Dendritic cell treated with granulocyte-macrophage colony-stimulating factor and Interleukin-4, amounts not matched to agents 40 ng/mL and 50 ng/mL, for 4 days (primary cell): ENCODE measurements at regions of chr1 and their contacts with region 1.

Region 1: DNA sequence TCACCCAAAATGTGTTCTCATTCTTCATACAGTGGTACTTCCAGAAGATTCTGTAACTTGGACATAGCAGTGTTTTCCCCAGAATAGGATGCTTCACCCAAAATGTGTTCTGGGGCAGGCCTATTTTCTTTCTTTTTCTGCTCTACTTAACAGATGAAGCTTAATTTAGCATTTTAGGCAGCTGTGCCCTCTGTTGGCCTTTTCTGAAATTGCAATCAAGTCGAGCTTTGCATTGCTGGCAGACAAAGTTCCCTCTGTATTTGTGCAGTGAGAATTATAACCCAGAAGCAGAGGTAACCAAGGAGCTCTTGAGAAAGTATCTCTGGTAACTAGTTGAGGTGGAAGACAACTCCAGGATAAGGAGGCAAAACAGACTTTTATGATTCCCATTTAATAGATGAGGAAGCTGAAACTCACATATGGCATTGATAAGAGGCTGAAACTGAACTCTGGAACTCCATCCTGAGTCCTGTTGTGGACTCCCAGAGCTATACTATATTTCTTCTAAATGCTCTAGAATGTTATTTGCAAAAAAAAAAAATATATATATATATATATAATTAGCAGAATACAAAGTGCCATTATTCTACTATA is 50.3 kb upstream of the L1TD1 start:
- H3K4me3 Mint-ChIP-seq: no peak overlapping the region
- H3K27ac Mint-ChIP-seq: no peak overlapping the region
- H3K4me1 Mint-ChIP-seq: peaks cover 6% of the 10 kb centered on the region
- H3K27me3 Mint-ChIP-seq: no peaks in the 10 kb centered on the region

Region 2: DNA sequence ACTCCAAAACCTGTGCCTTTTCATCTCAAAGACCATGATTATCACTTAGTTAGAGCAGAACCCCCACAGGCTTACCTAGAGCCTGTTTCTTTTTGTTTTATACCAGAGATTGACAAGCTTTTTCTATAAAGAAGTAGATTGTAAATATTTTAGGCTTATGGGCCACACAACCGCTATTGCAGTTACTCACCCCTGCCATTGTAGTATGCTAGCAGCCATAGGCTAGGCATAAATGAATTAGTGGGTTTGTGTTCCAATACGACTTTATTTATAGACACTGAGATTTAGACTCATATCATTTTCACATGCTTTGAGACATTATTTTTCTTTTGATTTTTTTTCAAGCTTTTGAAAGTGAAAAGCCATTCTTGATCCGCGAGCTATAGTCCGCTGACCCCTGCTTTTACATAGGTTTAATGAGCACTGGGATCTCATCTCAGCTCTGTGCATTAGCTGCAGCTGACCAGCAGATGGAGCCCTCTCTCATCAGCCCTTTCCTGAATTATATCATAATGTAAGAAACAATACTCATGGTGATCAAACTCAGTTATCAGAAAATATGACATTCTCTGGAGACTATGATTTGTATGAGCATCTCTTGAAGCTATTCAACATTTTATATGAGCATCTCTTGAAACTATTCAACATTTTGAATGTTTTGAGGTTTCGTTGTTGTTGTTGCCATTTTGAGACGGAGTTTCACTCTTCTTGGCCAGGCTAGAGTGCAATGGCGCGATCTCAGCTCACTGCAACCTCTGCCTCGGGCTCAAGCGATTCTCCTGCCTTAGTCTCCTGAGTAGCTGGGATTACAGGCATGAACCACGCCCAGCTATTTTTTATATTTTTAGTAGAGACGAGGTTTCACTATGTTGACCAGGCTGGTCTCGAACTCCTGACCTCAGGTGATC is 61.6 kb before region 1 on chr1:
- intact Hi-C with region 1: loop called (anchors 2 kb)
- H3K4me3 Mint-ChIP-seq: no peak overlapping the region
- H3K27ac Mint-ChIP-seq: no peak overlapping the region
- H3K4me1 Mint-ChIP-seq: no peaks in the 10 kb centered on the region
- H3K27me3 Mint-ChIP-seq: no peaks in the 10 kb centered on the region

Region 3: DNA sequence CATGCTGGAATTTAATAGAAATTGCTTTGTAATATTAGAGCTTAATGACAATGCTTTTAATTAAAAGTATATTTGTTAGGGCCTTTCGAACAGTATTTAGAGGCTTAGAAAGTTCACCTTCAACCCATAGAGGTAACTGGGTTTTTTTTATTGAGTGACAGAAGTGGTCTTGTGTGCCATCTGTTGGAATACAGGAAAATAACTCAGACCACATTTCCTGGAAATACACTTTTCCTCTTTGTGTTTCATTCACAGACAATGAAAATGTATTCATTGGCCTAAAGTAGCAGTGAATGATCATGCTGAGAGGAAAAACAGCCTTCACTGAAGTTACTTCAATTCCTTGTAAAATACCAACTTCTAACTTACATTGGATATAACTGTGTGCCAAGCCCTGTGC is 33.3 kb before region 1 on chr1:
- intact Hi-C with region 1: no loop called
- H3K4me3 Mint-ChIP-seq: no peak overlapping the region
- H3K27ac Mint-ChIP-seq: no peak overlapping the region
- H3K4me1 Mint-ChIP-seq: peaks cover under 1% of the 10 kb centered on the region
- H3K27me3 Mint-ChIP-seq: no peaks in the 10 kb centered on the region

Region 4: DNA sequence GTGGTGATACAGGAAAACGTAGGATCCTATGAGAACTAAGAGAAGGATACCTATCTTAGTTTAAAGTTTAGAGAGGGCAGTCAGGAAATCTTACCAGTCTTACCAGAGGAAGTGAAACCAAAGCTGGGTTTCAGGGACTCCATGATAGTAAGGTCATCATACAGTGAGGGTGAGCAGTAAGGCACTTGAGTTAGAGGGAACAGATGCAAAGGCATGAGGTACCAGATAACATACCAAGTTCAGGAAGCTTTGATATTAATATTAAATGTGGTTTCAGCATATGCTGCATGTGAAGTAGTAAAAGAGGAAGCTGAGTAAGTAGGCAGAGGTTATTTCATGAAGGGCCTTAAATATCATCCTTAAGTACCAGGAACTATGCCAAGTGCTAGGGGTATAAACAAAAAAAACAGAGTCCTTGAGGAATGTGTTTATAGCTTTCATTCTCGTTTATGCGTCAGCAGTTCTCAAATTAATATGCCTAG is 656.5 kb after region 1 on chr1:
- intact Hi-C with region 1: no loop called
- H3K4me3 Mint-ChIP-seq: peak overlapping the region; percentile 34
- H3K27ac Mint-ChIP-seq: peak overlapping the region; percentile 90
- H3K4me1 Mint-ChIP-seq: peaks cover 32% of the 10 kb centered on the region
- H3K27me3 Mint-ChIP-seq: no peaks in the 10 kb centered on the region